ENCODE measurements at regions of chr6 and their contacts with region 1.

Region 1: GRCh38 chr6:31580807-31581433 is 1.3 kb downstream of the LTB start:
- DNase-seq: peak; percentile 93 to 98 (median 97)
- ATAC-seq: peak; percentile 98
- H3K4me3 ChIP-seq: peak overlapping the region; percentile 62
- H3K27ac ChIP-seq: peak overlapping the region; percentile 45; the same call in 1 of the 3 replicates
- H3K4me1 ChIP-seq: peaks cover 3 to 24% of the 10 kb centered on the region in 2 experiments; a peak in 4 of 5 replicates
- H3K27me3 ChIP-seq: no peaks in the 10 kb centered on the region
- CTCF ChIP-seq: peak; percentile 98 to 99 (median 98)
- EP300 ChIP-seq: peak; percentile 37
- POLR2A ChIP-seq: peak; percentile 81
- RAD21 ChIP-seq: peak; percentile 86 to 88

Region 2: GRCh38 chr6:31525932-31526591 is 54.9 kb before region 1 on chr6:
- CTCF ChIA-PET with region 1: no interaction called
- POLR2A ChIA-PET with region 1: no interaction called
- in situ Hi-C with region 1: no loop called
- intact Hi-C with region 1: no loop called
- DNase-seq: peak in 3 of 4 experiments; percentile 45 to 62 (median 56)
- ATAC-seq: peak; percentile 38
- H3K4me3 ChIP-seq: no peak overlapping the region
- H3K27ac ChIP-seq: peak overlapping the region; percentile 66; the same call in 2 of the 3 replicates
- H3K4me1 ChIP-seq: peaks cover 10 to 20% of the 10 kb centered on the region in 2 experiments
- H3K27me3 ChIP-seq: no peaks in the 10 kb centered on the region
- CTCF ChIP-seq: no peak
- EP300 ChIP-seq: no peak
- POLR2A ChIP-seq: no peak
- RAD21 ChIP-seq: no peak

Region 3: GRCh38 chr6:31559958-31560696 is 20.8 kb before region 1 on chr6:
- CTCF ChIA-PET with region 1: interaction called, 3 read pairs
- POLR2A ChIA-PET with region 1: interaction called, 16 read pairs
- in situ Hi-C with region 1: no loop called
- intact Hi-C with region 1: no loop called
- DNase-seq: peak; percentile 66 to 92 (median 76)
- ATAC-seq: peak; percentile 79
- H3K4me3 ChIP-seq: no peak overlapping the region
- H3K27ac ChIP-seq: peak overlapping the region; percentile 41
- H3K4me1 ChIP-seq: peaks cover 47 to 64% of the 10 kb centered on the region in 2 experiments
- H3K27me3 ChIP-seq: no peaks in the 10 kb centered on the region
- CTCF ChIP-seq: peak in 2 of 3 experiments; percentile 23 to 34; a peak in 2 of 6 replicates
- EP300 ChIP-seq: peak; percentile 83
- POLR2A ChIP-seq: no peak
- RAD21 ChIP-seq: peak in 1 of 2 experiments; percentile 16; a peak in 1 of 4 replicates

Region 4: DNA sequence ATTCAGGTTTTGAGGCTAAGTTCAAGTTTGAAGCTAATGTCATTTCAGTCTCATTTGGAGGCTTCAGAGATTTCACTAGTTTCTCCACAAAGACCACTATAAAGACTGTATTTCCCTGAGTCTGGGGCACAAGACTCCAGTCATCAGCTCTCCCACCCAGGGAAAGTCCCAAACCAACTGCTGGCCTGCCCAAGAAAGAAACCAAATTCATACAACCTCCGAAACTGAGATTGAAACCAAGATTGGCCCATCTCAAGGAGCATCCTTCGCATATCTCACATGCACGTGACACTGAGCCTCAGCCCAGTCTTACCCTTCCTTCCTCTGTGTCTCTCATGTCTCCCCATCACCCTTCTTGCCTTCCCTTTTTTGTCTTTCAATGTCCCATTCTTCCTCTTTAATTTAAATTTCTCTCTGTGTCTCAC is 12.4 kb before region 1 on chr6:
- CTCF ChIA-PET with region 1: no interaction called
- POLR2A ChIA-PET with region 1: interaction called, 16 read pairs
- in situ Hi-C with region 1: no loop called
- intact Hi-C with region 1: no loop called
- DNase-seq: no peak
- ATAC-seq: no peak
- H3K4me3 ChIP-seq: no peak overlapping the region
- H3K27ac ChIP-seq: no peak overlapping the region
- H3K4me1 ChIP-seq: peaks cover 5 to 18% of the 10 kb centered on the region in 2 experiments; a peak in 4 of 5 replicates
- H3K27me3 ChIP-seq: no peaks in the 10 kb centered on the region
- CTCF ChIP-seq: no peak
- EP300 ChIP-seq: no peak
- POLR2A ChIP-seq: no peak
- RAD21 ChIP-seq: no peak

Region 5: GRCh38 chr6:31665501-31666336 is 84.8 kb after region 1 on chr6 and contains the start of gene CSNK2B:
- CTCF ChIA-PET with region 1: no interaction called
- POLR2A ChIA-PET with region 1: no interaction called
- in situ Hi-C with region 1: no loop called
- intact Hi-C with region 1: no loop called
- DNase-seq: peak; percentile 98 to 100 (median 99)
- ATAC-seq: peak; percentile 85
- H3K4me3 ChIP-seq: peak within 1 kb of the TSS; percentile 66
- H3K27ac ChIP-seq: peak within 1 kb of the TSS; percentile 97
- H3K4me1 ChIP-seq: peaks cover 36 to 39% of the 10 kb centered on the region in 2 experiments; a peak in 4 of 5 replicates
- H3K27me3 ChIP-seq: no peaks in the 10 kb centered on the region
- CTCF ChIP-seq: peak; percentile 18 to 42 (median 33); a peak in 4 of 6 replicates
- EP300 ChIP-seq: peak; percentile 47
- POLR2A ChIP-seq: peak; percentile 99
- RAD21 ChIP-seq: no peak
- polyA plus RNA-seq, gene CSNK2B: 870 to 972 TPM

Region 6: DNA sequence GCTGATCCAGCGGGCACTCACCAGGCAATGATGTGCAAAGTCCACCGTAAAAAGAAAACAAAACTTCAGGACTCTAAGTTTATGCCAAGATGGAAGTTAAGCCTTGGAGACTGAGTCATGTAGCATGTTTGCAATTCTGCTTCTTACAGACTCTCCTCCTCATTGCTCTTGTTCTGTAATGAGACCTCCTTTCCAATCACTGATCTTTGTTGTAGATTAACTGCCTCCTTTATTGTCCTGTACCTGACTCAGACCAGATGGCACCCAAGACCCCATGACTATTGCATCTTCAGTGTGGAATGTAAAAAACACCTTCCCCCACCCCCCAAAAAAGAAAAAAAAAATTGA is 270.5 kb after region 1 on chr6:
- CTCF ChIA-PET with region 1: no interaction called
- POLR2A ChIA-PET with region 1: no interaction called
- in situ Hi-C with region 1: no loop called
- intact Hi-C with region 1: no loop called
- DNase-seq: no peak
- ATAC-seq: no peak
- H3K4me3 ChIP-seq: no peak overlapping the region
- H3K27ac ChIP-seq: no peak overlapping the region
- H3K4me1 ChIP-seq: peaks cover 0 to 8% of the 10 kb centered on the region in 2 experiments; a peak in 2 of 5 replicates
- H3K27me3 ChIP-seq: no peaks in the 10 kb centered on the region
- CTCF ChIP-seq: no peak
- EP300 ChIP-seq: no peak
- POLR2A ChIP-seq: no peak
- RAD21 ChIP-seq: no peak